Caco-2 (cell line): ENCODE measurements at regions of chr20 and their contacts with region 1.

Region 1: DNA sequence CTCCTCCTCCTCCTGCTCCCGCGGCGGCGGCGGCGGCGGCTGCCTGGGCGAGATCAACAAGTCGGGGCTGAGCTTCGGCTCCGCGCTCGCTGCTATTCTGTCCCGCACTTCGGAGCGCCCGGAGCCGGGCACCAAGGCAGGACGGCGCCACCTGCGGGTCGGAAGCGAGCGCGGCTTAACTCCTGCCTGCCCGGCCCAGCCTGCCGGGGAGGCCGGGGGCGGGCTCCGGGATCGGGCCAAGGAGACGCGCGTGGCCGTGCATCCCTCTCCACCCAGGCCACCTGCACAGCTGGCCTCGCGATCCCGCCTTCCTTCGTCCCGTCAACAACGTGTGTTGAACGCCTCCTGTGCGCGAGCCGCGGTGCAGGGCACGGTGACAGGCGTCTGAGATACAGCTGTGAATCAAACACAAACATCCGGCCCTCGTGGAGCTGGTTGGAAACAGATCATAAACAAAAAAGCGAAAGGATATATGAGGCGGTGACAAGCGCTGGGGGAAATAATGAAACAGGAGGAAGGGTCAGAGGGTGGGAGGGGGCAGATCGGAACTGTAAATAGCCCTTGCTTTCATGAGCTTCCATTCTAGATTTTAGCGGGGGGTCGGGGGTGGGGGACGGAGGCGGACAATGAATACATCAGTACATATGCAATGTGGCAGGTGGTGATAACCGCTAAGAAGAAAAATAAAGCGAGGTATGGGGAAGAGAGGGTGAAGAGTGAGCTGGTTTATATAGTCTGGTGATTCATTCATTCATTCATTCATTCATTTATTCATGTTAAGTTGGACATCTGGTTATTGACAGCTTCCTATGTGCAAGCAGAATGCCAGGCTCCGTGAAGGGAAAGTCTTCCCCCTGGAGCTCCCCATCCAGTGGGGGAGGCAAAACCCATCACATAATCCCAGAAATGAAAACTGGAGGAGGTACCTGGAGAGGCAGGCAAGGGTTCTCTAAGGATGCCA is 2.0 kb upstream of the KCNB1 start:
- DNase-seq: peak; percentile 91 to 95
- H3K4me3 ChIP-seq: peak overlapping the region; percentile 55
- H3K4me3 Mint-ChIP-seq: peak overlapping the region; percentile 68
- H3K27ac Mint-ChIP-seq: no peak overlapping the region
- H3K4me1 ChIP-seq: peaks cover 4% of the 10 kb centered on the region; the same call in 1 of the 2 replicates
- H3K4me1 Mint-ChIP-seq: peaks cover 8% of the 10 kb centered on the region
- H3K27me3 ChIP-seq: peaks cover 2% of the 10 kb centered on the region
- H3K27me3 Mint-ChIP-seq: peaks cover 34% of the 10 kb centered on the region
- CTCF ChIP-seq: peak; percentile 96 to 98

Region 2: GRCh38 chr20:49345518-49345917 is 138.9 kb before region 1 on chr20:
- CTCF ChIA-PET with region 1: interaction called, 14 read pairs
- POLR2A ChIA-PET with region 1: no interaction called
- intact Hi-C with region 1: no loop called
- DNase-seq: no peak
- H3K4me3 ChIP-seq: no peak overlapping the region
- H3K4me3 Mint-ChIP-seq: no peak overlapping the region
- H3K27ac Mint-ChIP-seq: no peak overlapping the region
- H3K4me1 ChIP-seq: peaks cover 7% of the 10 kb centered on the region
- H3K4me1 Mint-ChIP-seq: no peaks in the 10 kb centered on the region
- H3K27me3 ChIP-seq: no peaks in the 10 kb centered on the region; the same call in 1 of the 2 replicates
- H3K27me3 Mint-ChIP-seq: peaks cover 16% of the 10 kb centered on the region
- CTCF ChIP-seq: no peak

Region 3: GRCh38 chr20:49418809-49419208 is 65.7 kb before region 1 on chr20:
- CTCF ChIA-PET with region 1: interaction called, 13 read pairs
- POLR2A ChIA-PET with region 1: no interaction called
- intact Hi-C with region 1: no loop called
- DNase-seq: no peak
- H3K4me3 ChIP-seq: no peak overlapping the region
- H3K4me3 Mint-ChIP-seq: no peak overlapping the region
- H3K27ac Mint-ChIP-seq: no peak overlapping the region
- H3K4me1 ChIP-seq: peaks cover 10% of the 10 kb centered on the region
- H3K4me1 Mint-ChIP-seq: peaks cover 20% of the 10 kb centered on the region
- H3K27me3 ChIP-seq: no peaks in the 10 kb centered on the region
- H3K27me3 Mint-ChIP-seq: peaks cover 3% of the 10 kb centered on the region
- CTCF ChIP-seq: no peak

Region 4: GRCh38 chr20:49496553-49497397 is 12.3 kb after region 1 on chr20:
- CTCF ChIA-PET with region 1: interaction called, 24 read pairs
- POLR2A ChIA-PET with region 1: no interaction called
- intact Hi-C with region 1: no loop called
- DNase-seq: no peak
- H3K4me3 ChIP-seq: no peak overlapping the region
- H3K4me3 Mint-ChIP-seq: no peak overlapping the region
- H3K27ac Mint-ChIP-seq: no peak overlapping the region
- H3K4me1 ChIP-seq: peaks cover 11% of the 10 kb centered on the region; the same call in 1 of the 2 replicates
- H3K4me1 Mint-ChIP-seq: peaks cover 9% of the 10 kb centered on the region
- H3K27me3 ChIP-seq: no peaks in the 10 kb centered on the region
- H3K27me3 Mint-ChIP-seq: peaks cover 6% of the 10 kb centered on the region
- CTCF ChIP-seq: no peak